ENCODE measurements at regions of chr7 and their contacts with region 1.

Region 1: GRCh38 chr7:133081599-133082389 is at the start of gene CHCHD3:
- DNase-seq: peak; percentile 83 to 97 (median 95)
- ATAC-seq: peak; percentile 99
- H3K4me3 ChIP-seq: peak within 1 kb of the TSS; percentile 94
- H3K4me3 Mint-ChIP-seq: peak within 1 kb of the TSS; percentile 87 to 95 (median 92)
- H3K27ac ChIP-seq: peak within 1 kb of the TSS; percentile 93
- H3K27ac Mint-ChIP-seq: peak within 1 kb of the TSS; percentile 52 to 96 (median 93)
- H3K4me1 ChIP-seq: peaks cover 14 to 17% of the 10 kb centered on the region in 2 donors
- H3K4me1 Mint-ChIP-seq: peaks cover 13 to 44% (median 34%) of the 10 kb centered on the region in 7 donors
- H3K27me3 ChIP-seq: no peaks in the 10 kb centered on the region
- H3K27me3 Mint-ChIP-seq: peaks cover 0 to 7% (median 0%) of the 10 kb centered on the region in 5 donors
- total RNA-seq, gene CHCHD3: 25.6 to 44.6 (median 31.2) TPM

Region 2: DNA sequence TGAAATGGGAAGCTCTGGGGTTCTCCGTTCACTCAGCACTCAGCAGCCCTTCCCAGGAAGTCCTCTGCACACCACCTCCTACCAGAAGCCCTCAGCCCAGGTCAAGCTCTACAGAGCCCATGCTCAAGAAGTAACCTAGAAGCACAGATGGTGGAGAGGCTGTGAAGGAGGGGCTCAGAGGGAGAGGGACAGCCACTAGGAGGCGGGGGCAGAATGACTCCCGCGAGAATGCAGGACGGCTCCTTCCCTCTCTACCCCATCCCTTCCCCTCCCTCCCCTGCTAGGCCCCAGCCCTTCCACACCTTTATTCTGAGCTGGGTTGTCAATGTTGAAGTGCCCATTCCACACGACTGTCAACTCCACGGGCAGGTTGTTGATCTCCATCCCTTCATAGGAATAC is 878.8 kb before region 1 on chr7:
- CTCF ChIA-PET with region 1: no interaction called
- POLR2A ChIA-PET with region 1: no interaction called
- intact Hi-C with region 1: no loop called
- DNase-seq: no peak
- ATAC-seq: no peak
- H3K4me3 ChIP-seq: no peak overlapping the region
- H3K4me3 Mint-ChIP-seq: no peak overlapping the region
- H3K27ac ChIP-seq: no peak overlapping the region
- H3K27ac Mint-ChIP-seq: no peak overlapping the region
- H3K4me1 ChIP-seq: no peaks in the 10 kb centered on the region
- H3K4me1 Mint-ChIP-seq: peaks cover 0 to 2% (median 0%) of the 10 kb centered on the region in 7 donors
- H3K27me3 ChIP-seq: no peaks in the 10 kb centered on the region
- H3K27me3 Mint-ChIP-seq: peaks cover 0 to 14% (median 4%) of the 10 kb centered on the region in 5 donors

Region 3: DNA sequence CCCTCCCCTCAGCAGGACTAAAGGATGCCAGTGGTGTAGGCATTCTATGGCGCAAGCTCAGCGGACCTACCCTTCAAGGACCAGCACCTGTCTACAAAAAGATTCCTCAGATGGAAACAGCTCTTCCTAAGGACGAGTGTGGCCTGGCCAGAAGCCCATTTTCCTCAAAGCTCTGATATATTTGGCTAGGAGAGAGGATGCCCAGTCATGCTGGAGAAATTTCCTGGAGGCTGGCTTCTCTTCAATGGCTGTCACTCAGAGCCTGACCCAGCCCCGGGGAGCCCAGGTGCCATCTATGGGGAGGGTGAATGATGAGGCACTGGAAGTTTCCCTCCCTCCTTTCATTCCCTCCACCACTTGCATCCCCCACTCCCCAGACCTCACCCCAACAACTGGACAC is 617.0 kb before region 1 on chr7:
- CTCF ChIA-PET with region 1: no interaction called
- POLR2A ChIA-PET with region 1: no interaction called
- intact Hi-C with region 1: loop called in 1 of 2 experiments (anchors 1 kb)
- DNase-seq: no peak
- ATAC-seq: no peak
- H3K4me3 ChIP-seq: no peak overlapping the region
- H3K4me3 Mint-ChIP-seq: no peak overlapping the region
- H3K27ac ChIP-seq: no peak overlapping the region
- H3K27ac Mint-ChIP-seq: peak overlapping the region in 1 of 9 donors; percentile 20
- H3K4me1 ChIP-seq: peaks cover 10 to 16% of the 10 kb centered on the region in 2 donors
- H3K4me1 Mint-ChIP-seq: peaks cover 20 to 65% (median 29%) of the 10 kb centered on the region in 7 donors
- H3K27me3 ChIP-seq: no peaks in the 10 kb centered on the region
- H3K27me3 Mint-ChIP-seq: peaks cover 0 to 21% (median 0%) of the 10 kb centered on the region in 5 donors

Region 4: GRCh38 chr7:132773527-132773956 is 308.3 kb before region 1 on chr7:
- CTCF ChIA-PET with region 1: no interaction called
- POLR2A ChIA-PET with region 1: interaction called, 3 read pairs
- intact Hi-C with region 1: loop called in 1 of 2 experiments (anchors 1 kb)
- DNase-seq: no peak
- ATAC-seq: no peak
- H3K4me3 ChIP-seq: no peak overlapping the region
- H3K4me3 Mint-ChIP-seq: no peak overlapping the region
- H3K27ac ChIP-seq: no peak overlapping the region
- H3K27ac Mint-ChIP-seq: peak overlapping the region in 3 of 9 donors; percentile 0 to 53 (median 42)
- H3K4me1 ChIP-seq: peaks cover 0 to 24% of the 10 kb centered on the region in 2 donors
- H3K4me1 Mint-ChIP-seq: peaks cover 22 to 53% (median 39%) of the 10 kb centered on the region in 7 donors
- H3K27me3 ChIP-seq: no peaks in the 10 kb centered on the region
- H3K27me3 Mint-ChIP-seq: peaks cover 0 to 8% (median 0%) of the 10 kb centered on the region in 5 donors

Region 5: DNA sequence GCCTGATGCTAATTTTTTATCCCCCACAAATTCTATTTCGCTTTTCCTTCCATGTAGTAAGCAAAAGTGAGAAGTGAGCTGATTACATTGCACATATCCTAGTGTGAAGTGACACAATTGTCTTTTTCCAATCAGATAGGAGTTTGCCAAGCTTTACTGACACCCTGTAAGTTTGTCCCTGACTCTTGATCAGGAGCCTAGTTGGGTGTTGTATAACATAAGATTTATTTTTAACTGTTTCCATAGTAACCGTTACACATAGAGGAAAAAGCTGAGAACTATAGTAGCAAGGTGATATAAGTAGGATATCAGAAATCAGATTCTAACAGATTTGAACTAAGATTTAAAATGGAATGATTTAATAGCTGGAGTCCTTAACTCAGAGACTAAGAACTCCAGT is 202.3 kb after region 1 on chr7:
- CTCF ChIA-PET with region 1: no interaction called
- POLR2A ChIA-PET with region 1: no interaction called
- intact Hi-C with region 1: no loop called
- DNase-seq: no peak
- ATAC-seq: no peak
- H3K4me3 ChIP-seq: no peak overlapping the region
- H3K4me3 Mint-ChIP-seq: no peak overlapping the region
- H3K27ac ChIP-seq: no peak overlapping the region
- H3K27ac Mint-ChIP-seq: no peak overlapping the region
- H3K4me1 ChIP-seq: no peaks in the 10 kb centered on the region
- H3K4me1 Mint-ChIP-seq: peaks cover 0 to 41% (median 23%) of the 10 kb centered on the region in 7 donors
- H3K27me3 ChIP-seq: no peaks in the 10 kb centered on the region
- H3K27me3 Mint-ChIP-seq: no peaks in the 10 kb centered on the region

Region 6: GRCh38 chr7:134126966-134127848 is 1045.4 kb after region 1 on chr7 and contains the start of gene LRGUK:
- CTCF ChIA-PET with region 1: no interaction called
- POLR2A ChIA-PET with region 1: no interaction called
- intact Hi-C with region 1: loop called in 1 of 2 experiments (anchors 1 kb)
- DNase-seq: peak; percentile 55 to 82 (median 77)
- ATAC-seq: peak; percentile 100
- H3K4me3 ChIP-seq: peak within 1 kb of the TSS; percentile 93
- H3K4me3 Mint-ChIP-seq: peak within 1 kb of the TSS; percentile 80 to 96 (median 88)
- H3K27ac ChIP-seq: no peak within 1 kb of the TSS
- H3K27ac Mint-ChIP-seq: peak within 1 kb of the TSS in 3 of 9 donors; percentile 16 to 65 (median 46)
- H3K4me1 ChIP-seq: peaks cover 3 to 9% of the 10 kb centered on the region in 2 donors
- H3K4me1 Mint-ChIP-seq: peaks cover 15 to 26% (median 18%) of the 10 kb centered on the region in 7 donors
- H3K27me3 ChIP-seq: no peaks in the 10 kb centered on the region
- H3K27me3 Mint-ChIP-seq: peaks cover 20 to 44% (median 23%) of the 10 kb centered on the region in 5 donors
- total RNA-seq, gene LRGUK: 0.22 to 1.0 (median 0.43) TPM

Region 7: GRCh38 chr7:134986363-134987251 is 1904.8 kb after region 1 on chr7 and contains the start of gene AGBL3:
- CTCF ChIA-PET with region 1: no interaction called
- POLR2A ChIA-PET with region 1: no interaction called
- intact Hi-C with region 1: loop called in 1 of 2 experiments (anchors 5 kb)
- DNase-seq: peak; percentile 80 to 92 (median 89)
- ATAC-seq: peak; percentile 94
- H3K4me3 ChIP-seq: peak within 1 kb of the TSS; percentile 92
- H3K4me3 Mint-ChIP-seq: peak within 1 kb of the TSS; percentile 93 to 100 (median 98)
- H3K27ac ChIP-seq: peak within 1 kb of the TSS; percentile 96
- H3K27ac Mint-ChIP-seq: peak within 1 kb of the TSS; percentile 97 to 100 (median 99)
- H3K4me1 ChIP-seq: no peaks in the 10 kb centered on the region
- H3K4me1 Mint-ChIP-seq: peaks cover 20 to 61% (median 52%) of the 10 kb centered on the region in 7 donors
- H3K27me3 ChIP-seq: no peaks in the 10 kb centered on the region
- H3K27me3 Mint-ChIP-seq: no peaks in the 10 kb centered on the region
- total RNA-seq, gene AGBL3: 2.1 to 6.6 (median 3.8) TPM